ENCODE measurements at regions of chr18 and their contacts with region 1.

Region 1: GRCh38 chr18:13823707-13824395 is at the start of gene MC5R:
- DNase-seq: peak; percentile 54 to 74 (median 62)
- H3K4me3 ChIP-seq: no peak within 1 kb of the TSS
- H3K4me3 Mint-ChIP-seq: peak within 1 kb of the TSS in 6 of 7 donors; percentile 32 to 70 (median 58)
- H3K27ac ChIP-seq: no peak within 1 kb of the TSS
- H3K27ac Mint-ChIP-seq: peak within 1 kb of the TSS in 1 of 8 donors; percentile 3
- H3K4me1 ChIP-seq: peaks cover 4% of the 10 kb centered on the region
- H3K4me1 Mint-ChIP-seq: peaks cover 0 to 6% (median 2%) of the 10 kb centered on the region in 3 donors
- H3K27me3 ChIP-seq: peaks cover 5% of the 10 kb centered on the region
- H3K27me3 Mint-ChIP-seq: peaks cover 23 to 42% of the 10 kb centered on the region in 2 donors
- total RNA-seq, gene MC5R: not detected

Region 2: GRCh38 chr18:13813271-13813849 is 10.5 kb before region 1 on chr18:
- CTCF ChIA-PET with region 1: interaction called, 28 read pairs
- POLR2A ChIA-PET with region 1: no interaction called
- DNase-seq: peak; percentile 6 to 55 (median 27)
- H3K4me3 ChIP-seq: no peak overlapping the region
- H3K4me3 Mint-ChIP-seq: no peak overlapping the region
- H3K27ac ChIP-seq: no peak overlapping the region
- H3K27ac Mint-ChIP-seq: no peak overlapping the region
- H3K4me1 ChIP-seq: no peaks in the 10 kb centered on the region
- H3K4me1 Mint-ChIP-seq: no peaks in the 10 kb centered on the region
- H3K27me3 ChIP-seq: no peaks in the 10 kb centered on the region
- H3K27me3 Mint-ChIP-seq: peaks cover 4 to 8% of the 10 kb centered on the region in 2 donors

Region 3: GRCh38 chr18:14577971-14578370 is 754.1 kb after region 1 on chr18:
- CTCF ChIA-PET with region 1: no interaction called
- POLR2A ChIA-PET with region 1: interaction called, 11 read pairs
- DNase-seq: no peak
- H3K4me3 ChIP-seq: no peak overlapping the region
- H3K4me3 Mint-ChIP-seq: no peak overlapping the region
- H3K27ac ChIP-seq: no peak overlapping the region
- H3K27ac Mint-ChIP-seq: no peak overlapping the region
- H3K4me1 ChIP-seq: no peaks in the 10 kb centered on the region
- H3K4me1 Mint-ChIP-seq: no peaks in the 10 kb centered on the region
- H3K27me3 ChIP-seq: no peaks in the 10 kb centered on the region
- H3K27me3 Mint-ChIP-seq: peaks cover 3 to 12% of the 10 kb centered on the region in 2 donors